Right ventricle myocardium superior (tissue), 1 donor: ENCODE measurements at regions of chr9 and their contacts with region 1.

Region 1: DNA sequence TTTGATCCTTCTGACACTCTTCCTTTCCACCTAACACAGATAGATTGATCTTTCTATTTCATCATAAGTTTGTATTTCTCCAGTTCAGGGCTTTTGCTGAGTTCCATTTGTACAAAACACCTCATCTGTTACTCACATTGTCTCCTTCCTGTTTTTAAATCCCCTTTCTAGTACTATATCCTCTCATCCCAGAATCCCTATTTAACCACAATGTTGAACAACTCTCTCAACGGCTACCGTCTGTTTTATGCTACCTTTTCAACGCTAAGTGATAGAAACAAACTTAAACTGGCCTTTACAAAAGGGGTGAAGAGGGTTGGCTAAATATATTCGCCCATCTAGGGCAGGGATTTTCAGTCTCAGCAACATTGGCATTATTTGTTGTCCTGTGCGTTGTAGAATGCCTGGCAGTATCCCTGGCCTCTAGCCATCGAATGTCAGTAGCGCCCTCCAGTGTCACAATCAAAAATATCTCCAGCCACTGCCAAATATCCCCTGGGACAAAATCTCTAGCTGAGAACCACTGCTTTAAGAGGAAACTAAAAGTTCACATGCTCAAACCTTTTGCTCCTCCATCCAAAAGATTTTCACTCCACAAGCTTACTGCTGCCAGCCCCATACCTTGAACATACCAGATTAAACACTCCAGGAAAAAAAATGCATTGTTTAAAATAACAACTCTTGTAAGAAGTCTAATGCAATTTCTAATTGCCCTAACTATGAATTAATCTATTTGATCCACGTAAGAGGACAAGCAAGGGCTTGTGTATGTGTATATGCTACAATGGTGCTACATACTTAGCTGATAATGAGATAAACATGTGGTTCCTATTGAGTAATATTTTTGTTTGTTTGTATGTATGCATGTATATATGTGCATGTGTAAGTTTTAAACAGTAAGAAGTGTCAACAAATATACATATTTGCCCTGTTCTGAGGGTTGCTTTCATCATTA is 344.0 kb downstream of the PTPRD start:
- DNase-seq: no peak
- ATAC-seq: peak; percentile 93

Region 2: DNA sequence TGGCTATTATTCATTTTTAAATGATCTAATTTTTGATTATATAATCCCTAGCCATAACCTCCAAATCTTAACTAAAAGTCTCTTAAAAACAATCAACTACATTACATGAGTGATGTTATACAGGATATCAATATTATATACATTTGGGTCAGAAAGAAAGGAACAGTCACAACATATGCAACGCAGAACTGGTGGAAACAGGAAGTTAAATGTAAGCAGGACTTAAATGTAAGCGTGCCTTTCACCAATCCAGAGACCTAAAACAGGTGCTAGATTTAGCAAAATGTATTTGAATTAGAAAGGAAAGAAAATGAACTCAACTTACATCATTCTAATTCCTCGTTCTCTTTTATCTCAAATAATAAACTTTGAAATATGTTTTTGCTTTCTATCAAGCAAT is 394.5 kb before region 1 on chr9:
- intact Hi-C with region 1: no loop called
- DNase-seq: no peak
- ATAC-seq: no peak

Region 3: GRCh38 chr9:10059044-10059443 is 209.8 kb before region 1 on chr9:
- intact Hi-C with region 1: loop called (anchors 2 kb)
- DNase-seq: no peak
- ATAC-seq: peak; percentile 53

Region 4: DNA sequence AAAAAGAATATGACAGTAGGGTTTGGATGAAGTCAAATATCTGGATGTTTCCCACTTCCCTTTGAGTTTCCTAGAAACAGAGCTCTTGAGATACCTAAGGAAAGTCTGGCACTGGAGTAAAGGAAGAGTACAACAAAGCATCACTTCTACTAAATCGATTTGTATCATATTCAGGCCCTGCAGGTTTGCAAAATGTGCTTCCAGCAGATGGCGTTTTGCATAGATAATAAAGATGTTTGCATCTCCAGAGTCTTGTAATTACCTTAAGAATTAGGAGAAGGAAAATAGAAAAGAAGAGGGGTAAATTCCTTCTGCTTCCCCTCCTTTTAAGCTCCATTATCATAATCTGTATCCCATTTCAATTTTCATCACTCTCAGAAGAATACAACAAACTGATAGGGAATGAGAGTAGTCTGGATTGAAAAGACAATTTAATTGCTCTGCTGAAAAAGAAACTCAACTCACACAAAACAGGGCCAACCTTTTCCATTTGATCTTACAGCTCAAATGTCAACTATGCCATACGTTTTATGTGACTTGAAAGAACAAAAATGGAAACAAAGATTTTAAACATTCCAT is 36.4 kb before region 1 on chr9:
- intact Hi-C with region 1: loop called (anchors 5 kb)
- DNase-seq: no peak
- ATAC-seq: no peak

Region 5: GRCh38 chr9:10251490-10251889 is 17.3 kb before region 1 on chr9:
- intact Hi-C with region 1: no loop called
- DNase-seq: no peak
- ATAC-seq: peak; percentile 73